Ascending aorta (tissue), 2 donors: ENCODE measurements at regions of chr14 and their contacts with region 1.

Region 1: DNA sequence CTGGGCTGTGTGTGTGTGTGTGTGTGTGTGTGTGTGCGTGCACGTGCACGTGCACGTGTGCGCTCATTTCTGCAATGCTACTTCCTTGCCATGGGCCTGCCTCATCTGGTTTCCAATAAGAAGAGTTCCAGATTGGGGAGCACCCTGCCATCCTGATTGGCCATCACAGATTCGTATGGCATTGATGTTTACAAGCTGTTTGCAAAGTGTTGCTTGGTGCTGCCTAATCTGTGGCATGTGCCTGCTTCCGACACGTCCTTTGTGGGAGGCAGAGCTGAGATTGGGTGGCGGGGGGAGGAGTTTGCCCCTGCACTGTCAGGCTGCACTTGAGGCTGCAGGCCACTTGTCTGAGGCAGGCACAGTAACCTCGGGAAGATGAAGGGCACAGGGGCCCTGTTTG is 39.2 kb downstream of the SAMD4A start:
- DNase-seq: no peak
- H3K4me3 ChIP-seq: no peak overlapping the region
- H3K27ac ChIP-seq: peak overlapping the region; percentile 66 to 69
- H3K4me1 ChIP-seq: peaks cover 11 to 36% of the 10 kb centered on the region in 2 donors
- H3K27me3 ChIP-seq: no peaks in the 10 kb centered on the region
- CTCF ChIP-seq: no peak

Region 2: GRCh38 chr14:53814392-53814791 is 791.8 kb before region 1 on chr14:
- intact Hi-C with region 1: no loop called
- DNase-seq: no peak
- H3K4me3 ChIP-seq: no peak overlapping the region
- H3K27ac ChIP-seq: no peak overlapping the region
- H3K4me1 ChIP-seq: no peaks in the 10 kb centered on the region
- H3K27me3 ChIP-seq: no peaks in the 10 kb centered on the region
- CTCF ChIP-seq: no peak

Region 3: DNA sequence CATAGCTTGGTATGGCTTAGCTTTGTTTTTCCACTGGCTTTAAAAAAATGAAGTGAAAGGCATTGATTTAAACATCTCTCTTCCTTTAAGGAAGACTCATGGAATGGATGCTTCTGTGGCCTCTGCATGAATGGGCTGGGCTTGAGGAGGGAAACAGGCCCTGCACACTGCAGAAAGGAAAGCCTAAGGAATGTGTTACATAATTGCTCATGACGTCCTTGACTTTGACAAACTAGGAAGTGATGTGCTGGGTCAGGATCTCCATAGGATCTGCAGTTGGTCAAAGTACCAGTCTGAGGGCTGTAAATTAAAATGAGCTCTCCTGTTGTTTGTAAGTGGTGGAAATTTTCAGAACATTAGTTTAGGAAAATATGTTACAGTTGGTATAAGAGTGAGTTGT is 26.6 kb before region 1 on chr14:
- intact Hi-C with region 1: loop called (anchors 2 kb)
- DNase-seq: no peak
- H3K4me3 ChIP-seq: no peak overlapping the region
- H3K27ac ChIP-seq: no peak overlapping the region
- H3K4me1 ChIP-seq: peaks cover 7 to 35% of the 10 kb centered on the region in 2 donors
- H3K27me3 ChIP-seq: no peaks in the 10 kb centered on the region
- CTCF ChIP-seq: no peak